Ascending aorta (tissue), 2 donors: ENCODE measurements at regions of chrX and their contacts with region 1.

Region 1: GRCh38 chrX:142711846-142712245 is 313.9 kb upstream of the SPANXN4 start:
- DNase-seq: no peak
- H3K4me3 ChIP-seq: no peak overlapping the region
- H3K27ac ChIP-seq: no peak overlapping the region
- H3K4me1 ChIP-seq: no peaks in the 10 kb centered on the region
- H3K27me3 ChIP-seq: no peaks in the 10 kb centered on the region
- CTCF ChIP-seq: no peak

Region 2: DNA sequence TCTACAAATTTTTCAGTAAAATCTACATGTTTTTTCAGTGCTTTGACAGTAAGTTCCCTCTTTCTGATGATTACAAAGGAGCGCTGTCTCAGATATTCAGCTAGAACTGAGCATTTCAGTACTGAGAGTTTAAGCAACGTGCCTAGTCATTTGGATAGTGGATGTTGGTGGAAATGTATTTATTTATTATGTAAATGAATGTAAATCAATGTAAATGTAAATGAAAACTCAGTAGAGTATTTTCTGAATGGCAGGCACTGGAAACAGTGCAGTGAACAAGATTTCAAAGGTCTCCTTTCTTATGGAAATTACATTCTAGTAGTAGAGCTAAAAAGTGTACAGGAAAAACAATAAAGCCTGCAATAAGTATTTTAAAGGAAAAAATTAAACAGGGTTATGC is 56.3 kb before region 1 on chrX:
- intact Hi-C with region 1: loop called (anchors 10 kb)
- DNase-seq: no peak
- H3K4me3 ChIP-seq: no peak overlapping the region
- H3K27ac ChIP-seq: no peak overlapping the region
- H3K4me1 ChIP-seq: no peaks in the 10 kb centered on the region
- H3K27me3 ChIP-seq: no peaks in the 10 kb centered on the region
- CTCF ChIP-seq: no peak